ENCODE measurements at regions of chr1 and their contacts with region 1.

Region 1: GRCh38 chr1:34865981-34866761 is 6.6 kb upstream of the SMIM12 start:
- DNase-seq: peak; percentile 41
- ATAC-seq: peak; percentile 73
- H3K4me3 ChIP-seq: peak overlapping the region; percentile 34 to 64 (median 54); a peak in 5 of 6 replicates
- H3K27ac ChIP-seq: no peak overlapping the region
- H3K4me1 ChIP-seq: peaks cover 6% of the 10 kb centered on the region; the same call in 1 of the 2 replicates
- H3K27me3 ChIP-seq: peaks cover 1 to 17% of the 10 kb centered on the region in 2 experiments
- CTCF ChIP-seq: peak; percentile 91
- EP300 ChIP-seq: no peak
- POLR2A ChIP-seq: no peak
- RAD21 ChIP-seq: peak; percentile 50

Region 2: DNA sequence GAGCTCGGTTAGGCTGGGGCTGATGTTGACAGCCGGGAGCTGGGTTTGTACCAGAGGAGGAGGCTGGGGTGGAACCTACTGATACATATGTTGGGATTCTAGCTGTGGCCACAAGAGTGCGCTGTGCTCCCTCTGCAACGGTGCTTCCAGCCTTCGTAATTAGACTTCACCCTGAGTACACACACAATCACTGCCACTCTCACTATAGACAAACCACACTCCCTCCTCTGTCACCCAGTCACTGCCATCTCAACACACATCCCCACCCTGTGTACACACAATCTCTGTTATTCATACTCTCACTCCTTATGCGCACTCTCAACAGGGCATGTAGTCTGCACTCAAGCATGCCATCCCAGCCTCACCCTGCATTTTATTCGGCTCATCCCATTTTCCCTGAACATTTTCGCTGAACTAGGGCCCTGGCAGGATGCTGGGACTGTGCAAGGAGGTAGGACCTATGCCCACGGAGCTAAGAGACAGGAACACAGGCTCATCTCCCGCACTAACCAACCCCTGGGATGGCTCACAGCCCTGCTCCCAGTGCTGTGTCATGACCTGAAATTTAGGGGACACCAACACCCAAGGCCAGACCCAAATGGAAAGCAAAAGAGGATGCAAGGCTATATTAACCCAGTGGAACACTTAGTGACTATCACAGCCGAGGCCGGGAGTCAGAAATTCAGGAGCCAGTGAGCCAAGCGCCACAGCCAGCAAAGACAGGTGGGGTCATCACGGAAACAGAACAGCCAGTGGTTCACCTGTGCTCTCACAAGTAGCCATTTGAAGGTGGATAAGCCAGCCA is 79.4 kb before region 1 on chr1:
- CTCF ChIA-PET with region 1: interaction called, 14 read pairs
- POLR2A ChIA-PET with region 1: no interaction called
- in situ Hi-C with region 1: no loop called
- intact Hi-C with region 1: loop called (anchors 1 kb)
- DNase-seq: peak; percentile 54
- ATAC-seq: peak; percentile 86
- H3K4me3 ChIP-seq: no peak overlapping the region
- H3K27ac ChIP-seq: no peak overlapping the region
- H3K4me1 ChIP-seq: no peaks in the 10 kb centered on the region
- H3K27me3 ChIP-seq: peaks cover 3 to 15% of the 10 kb centered on the region in 2 experiments; a peak in 4 of 5 replicates
- CTCF ChIP-seq: peak; percentile 93
- EP300 ChIP-seq: no peak
- POLR2A ChIP-seq: no peak
- RAD21 ChIP-seq: peak; percentile 80

Region 3: DNA sequence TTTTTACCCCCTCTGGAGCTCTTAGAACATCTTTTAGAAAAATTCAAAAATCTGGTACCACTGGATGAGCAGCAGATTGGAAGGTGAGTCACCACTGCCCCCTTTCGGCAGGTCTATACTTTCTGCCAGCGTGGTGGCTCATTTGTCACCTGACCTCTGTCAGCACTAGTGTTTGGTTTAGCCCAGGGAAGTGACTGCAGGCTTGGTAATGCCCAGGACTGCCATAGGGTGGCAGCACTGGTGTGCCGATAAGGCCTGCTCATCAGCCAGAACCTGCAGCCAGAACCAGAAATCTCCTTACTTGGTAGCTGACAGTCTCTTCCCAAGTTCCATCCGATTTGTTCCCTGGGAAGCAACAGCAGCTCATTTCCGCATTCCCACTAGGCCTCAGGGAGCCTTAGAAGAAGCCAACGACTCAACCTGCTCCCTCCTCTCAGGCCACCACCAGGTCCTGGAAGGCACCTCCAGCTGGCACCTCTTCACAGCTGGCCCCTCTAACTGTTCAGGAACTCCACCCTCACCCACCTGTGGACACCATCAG is 13.4 kb before region 1 on chr1:
- CTCF ChIA-PET with region 1: interaction called, 15 read pairs
- POLR2A ChIA-PET with region 1: interaction called, 5 read pairs
- in situ Hi-C with region 1: no loop called
- intact Hi-C with region 1: loop called (anchors 2 kb)
- DNase-seq: peak; percentile 92
- ATAC-seq: peak; percentile 98
- H3K4me3 ChIP-seq: no peak overlapping the region
- H3K27ac ChIP-seq: no peak overlapping the region
- H3K4me1 ChIP-seq: peaks cover 7% of the 10 kb centered on the region
- H3K27me3 ChIP-seq: no peaks in the 10 kb centered on the region
- CTCF ChIP-seq: peak; percentile 99
- EP300 ChIP-seq: no peak
- POLR2A ChIP-seq: no peak
- RAD21 ChIP-seq: peak; percentile 83

Region 4: GRCh38 chr1:34885405-34886247 is 19.5 kb after region 1 on chr1:
- CTCF ChIA-PET with region 1: no interaction called
- POLR2A ChIA-PET with region 1: no interaction called
- in situ Hi-C with region 1: no loop called
- intact Hi-C with region 1: no loop called
- DNase-seq: no peak
- ATAC-seq: peak; percentile 72
- H3K4me3 ChIP-seq: peak overlapping the region in 2 of 3 experiments; percentile 27 to 59; a peak in 1 of 6 replicates
- H3K27ac ChIP-seq: no peak overlapping the region
- H3K4me1 ChIP-seq: no peaks in the 10 kb centered on the region; the same call in 1 of the 2 replicates
- H3K27me3 ChIP-seq: peaks cover 3 to 40% of the 10 kb centered on the region in 2 experiments; a peak in 3 of 5 replicates
- CTCF ChIP-seq: no peak
- EP300 ChIP-seq: no peak
- POLR2A ChIP-seq: no peak
- RAD21 ChIP-seq: no peak

Measured in HepG2 (cell line).